CD14-positive monocyte (primary cell): ENCODE measurements at regions of chr11 and their contacts with region 1.

Region 1: DNA sequence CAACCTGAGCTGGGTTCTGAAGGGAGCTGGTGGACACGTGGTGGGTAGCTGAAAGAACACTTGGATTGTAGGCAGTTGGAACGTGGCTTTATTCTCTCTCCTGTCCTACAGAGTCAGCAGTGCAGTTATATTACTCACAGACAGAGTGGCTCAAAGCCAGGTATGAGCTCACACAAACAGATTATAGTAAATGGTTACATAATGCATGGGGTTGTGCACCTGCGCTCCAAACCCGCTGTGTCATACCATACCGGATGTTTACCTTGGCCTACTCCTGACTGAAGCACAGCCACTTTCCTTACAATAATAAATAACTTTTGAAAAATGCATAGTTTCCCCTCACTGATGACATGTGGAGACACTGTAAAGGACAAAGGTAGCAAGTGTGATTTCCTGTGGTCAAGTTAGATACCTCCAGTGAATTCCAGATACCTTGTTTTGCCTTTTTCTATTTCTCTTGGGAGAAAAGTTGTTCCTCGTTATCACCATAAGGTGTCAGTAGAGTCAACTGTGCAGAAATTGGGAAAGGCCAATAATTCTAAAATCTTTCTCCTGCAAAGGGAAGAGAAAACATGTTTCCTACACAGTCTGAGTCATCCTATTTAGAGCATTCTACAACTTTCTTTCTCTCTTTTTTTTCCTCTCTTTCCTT is 13.5 kb downstream of the MS4A6A start:
- DNase-seq: peak in 2 of 3 donors; percentile 51 to 65
- H3K4me3 ChIP-seq: no peak overlapping the region
- H3K4me3 Mint-ChIP-seq: no peak overlapping the region
- H3K27ac ChIP-seq: peak overlapping the region in 1 of 2 donors; percentile 5
- H3K27ac Mint-ChIP-seq: peak overlapping the region; percentile 64 to 88 (median 86)
- H3K4me1 ChIP-seq: peaks cover 40 to 59% of the 10 kb centered on the region in 2 donors
- H3K4me1 Mint-ChIP-seq: peaks cover 62% of the 10 kb centered on the region
- H3K27me3 ChIP-seq: no peaks in the 10 kb centered on the region
- H3K27me3 Mint-ChIP-seq: peaks cover 0 to 2% (median 0%) of the 10 kb centered on the region in 3 donors
- CTCF ChIP-seq: peak; percentile 82

Region 2: GRCh38 chr11:60204922-60205321 is 35.5 kb after region 1 on chr11:
- intact Hi-C with region 1: loop called in 1 of 2 experiments (anchors 5 kb)
- DNase-seq: peak; percentile 26 to 53 (median 37)
- H3K4me3 ChIP-seq: no peak overlapping the region
- H3K4me3 Mint-ChIP-seq: no peak overlapping the region
- H3K27ac ChIP-seq: peak overlapping the region in 1 of 2 donors; percentile 18
- H3K27ac Mint-ChIP-seq: peak overlapping the region in 3 of 7 donors; percentile 37 to 66 (median 40)
- H3K4me1 ChIP-seq: peaks cover 10 to 19% of the 10 kb centered on the region in 2 donors
- H3K4me1 Mint-ChIP-seq: peaks cover 21% of the 10 kb centered on the region
- H3K27me3 ChIP-seq: no peaks in the 10 kb centered on the region
- H3K27me3 Mint-ChIP-seq: no peaks in the 10 kb centered on the region
- CTCF ChIP-seq: no peak

Region 3: GRCh38 chr11:60252213-60253108 is 83.1 kb after region 1 on chr11:
- intact Hi-C with region 1: no loop called
- DNase-seq: peak in 2 of 3 donors; percentile 46 to 48
- H3K4me3 ChIP-seq: peak overlapping the region in 1 of 3 experiments; percentile 52
- H3K4me3 Mint-ChIP-seq: peak overlapping the region; percentile 11 to 72
- H3K27ac ChIP-seq: peak overlapping the region; percentile 60 to 74
- H3K27ac Mint-ChIP-seq: peak overlapping the region; percentile 71 to 90 (median 87)
- H3K4me1 ChIP-seq: peaks cover 37 to 43% of the 10 kb centered on the region in 2 donors
- H3K4me1 Mint-ChIP-seq: peaks cover 45% of the 10 kb centered on the region
- H3K27me3 ChIP-seq: no peaks in the 10 kb centered on the region
- H3K27me3 Mint-ChIP-seq: no peaks in the 10 kb centered on the region
- CTCF ChIP-seq: no peak